ENCODE measurements at regions of chrX and their contacts with region 1.

Region 1: DNA sequence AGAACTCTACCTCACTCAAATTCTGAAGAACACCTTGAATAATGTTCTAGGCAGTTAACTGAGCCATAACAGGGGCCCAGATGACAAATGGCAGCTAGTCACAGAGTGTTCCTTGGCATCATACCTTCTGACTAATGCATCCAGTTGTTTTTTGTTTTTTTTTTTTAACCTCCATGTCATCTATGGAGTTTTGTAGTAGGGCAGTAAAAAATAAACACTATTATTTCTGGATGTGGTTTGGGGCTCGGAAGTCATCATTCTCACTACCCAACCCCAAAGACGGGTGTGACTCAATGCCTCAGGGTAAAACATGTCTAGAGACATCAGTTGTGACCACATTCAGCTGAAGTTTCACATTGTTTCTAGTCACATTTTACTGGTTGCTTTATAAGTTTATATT is 31.2 kb upstream of the MCF2 start:
- DNase-seq: peak; percentile 26 to 49
- ATAC-seq: peak; percentile 84 to 92 (median 88)
- H3K4me3 ChIP-seq: no peak overlapping the region
- H3K4me3 Mint-ChIP-seq: peak overlapping the region; percentile 76
- H3K27ac ChIP-seq: peak overlapping the region; percentile 77
- H3K27ac Mint-ChIP-seq: peak overlapping the region; percentile 85 to 88
- H3K4me1 ChIP-seq: peaks cover 14% of the 10 kb centered on the region
- H3K4me1 Mint-ChIP-seq: peaks cover 34 to 41% of the 10 kb centered on the region in 2 donors
- H3K27me3 ChIP-seq: no peaks in the 10 kb centered on the region
- H3K27me3 Mint-ChIP-seq: no peaks in the 10 kb centered on the region
- CTCF ChIP-seq: no peak

Region 2: GRCh38 chrX:139766545-139766983 is 27.4 kb after region 1 on chrX:
- intact Hi-C with region 1: loop called (anchors 1 kb)
- DNase-seq: peak; percentile 24 to 63
- ATAC-seq: peak; percentile 87 to 96 (median 95)
- H3K4me3 ChIP-seq: no peak overlapping the region
- H3K4me3 Mint-ChIP-seq: no peak overlapping the region
- H3K27ac ChIP-seq: peak overlapping the region; percentile 61
- H3K27ac Mint-ChIP-seq: no peak overlapping the region
- H3K4me1 ChIP-seq: peaks cover 10% of the 10 kb centered on the region
- H3K4me1 Mint-ChIP-seq: no peaks in the 10 kb centered on the region
- H3K27me3 ChIP-seq: no peaks in the 10 kb centered on the region
- H3K27me3 Mint-ChIP-seq: no peaks in the 10 kb centered on the region
- CTCF ChIP-seq: no peak

Region 3: GRCh38 chrX:139795196-139795595 is 56.1 kb after region 1 on chrX:
- intact Hi-C with region 1: loop called (anchors 10 kb)
- DNase-seq: peak in 1 of 2 donors; percentile 27
- ATAC-seq: peak; percentile 90 to 99 (median 98)
- H3K4me3 ChIP-seq: no peak overlapping the region
- H3K4me3 Mint-ChIP-seq: peak overlapping the region; percentile 55
- H3K27ac ChIP-seq: peak overlapping the region; percentile 74
- H3K27ac Mint-ChIP-seq: peak overlapping the region; percentile 89 to 93
- H3K4me1 ChIP-seq: peaks cover 4% of the 10 kb centered on the region
- H3K4me1 Mint-ChIP-seq: peaks cover 16 to 25% of the 10 kb centered on the region in 2 donors
- H3K27me3 ChIP-seq: no peaks in the 10 kb centered on the region
- H3K27me3 Mint-ChIP-seq: no peaks in the 10 kb centered on the region
- CTCF ChIP-seq: no peak

Measured in natural killer cell (primary cell).